ENCODE measurements at regions of chr3 and their contacts with region 1.

Region 1: GRCh38 chr3:114418724-114419543 is 125.1 kb downstream of the TIGIT start:
- DNase-seq: peak; percentile 68
- H3K4me3 Mint-ChIP-seq: no peak overlapping the region
- H3K27ac Mint-ChIP-seq: peak overlapping the region; percentile 76
- H3K4me1 Mint-ChIP-seq: peaks cover 18% of the 10 kb centered on the region
- H3K27me3 Mint-ChIP-seq: no peaks in the 10 kb centered on the region

Region 2: DNA sequence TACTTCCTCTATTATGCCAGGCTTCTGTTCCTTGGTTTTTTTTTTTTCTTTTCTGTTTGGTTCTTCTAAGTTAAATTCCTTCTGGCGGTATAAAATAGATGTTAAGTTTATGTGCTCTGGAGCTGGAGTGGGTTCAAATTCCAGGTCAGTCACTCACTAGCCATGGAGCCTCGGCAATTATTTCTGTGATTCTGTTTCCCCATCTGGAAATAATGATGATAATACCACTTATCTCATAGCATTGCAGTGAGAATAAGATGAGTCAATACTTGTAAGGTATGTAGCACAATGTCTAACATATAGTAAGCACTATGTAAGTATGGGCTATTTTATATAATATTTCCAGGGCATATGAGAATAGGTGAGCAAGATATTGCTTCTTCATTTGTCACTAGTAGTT is 504.3 kb before region 1 on chr3:
- intact Hi-C with region 1: no loop called
- DNase-seq: no peak
- H3K4me3 Mint-ChIP-seq: no peak overlapping the region
- H3K27ac Mint-ChIP-seq: no peak overlapping the region
- H3K4me1 Mint-ChIP-seq: peaks cover 3% of the 10 kb centered on the region
- H3K27me3 Mint-ChIP-seq: peaks cover 12% of the 10 kb centered on the region

Region 3: GRCh38 chr3:114093596-114093995 is 325.3 kb before region 1 on chr3:
- intact Hi-C with region 1: no loop called
- DNase-seq: no peak
- H3K4me3 Mint-ChIP-seq: no peak overlapping the region
- H3K27ac Mint-ChIP-seq: no peak overlapping the region
- H3K4me1 Mint-ChIP-seq: peaks cover 2% of the 10 kb centered on the region
- H3K27me3 Mint-ChIP-seq: peaks cover 16% of the 10 kb centered on the region

Region 4: DNA sequence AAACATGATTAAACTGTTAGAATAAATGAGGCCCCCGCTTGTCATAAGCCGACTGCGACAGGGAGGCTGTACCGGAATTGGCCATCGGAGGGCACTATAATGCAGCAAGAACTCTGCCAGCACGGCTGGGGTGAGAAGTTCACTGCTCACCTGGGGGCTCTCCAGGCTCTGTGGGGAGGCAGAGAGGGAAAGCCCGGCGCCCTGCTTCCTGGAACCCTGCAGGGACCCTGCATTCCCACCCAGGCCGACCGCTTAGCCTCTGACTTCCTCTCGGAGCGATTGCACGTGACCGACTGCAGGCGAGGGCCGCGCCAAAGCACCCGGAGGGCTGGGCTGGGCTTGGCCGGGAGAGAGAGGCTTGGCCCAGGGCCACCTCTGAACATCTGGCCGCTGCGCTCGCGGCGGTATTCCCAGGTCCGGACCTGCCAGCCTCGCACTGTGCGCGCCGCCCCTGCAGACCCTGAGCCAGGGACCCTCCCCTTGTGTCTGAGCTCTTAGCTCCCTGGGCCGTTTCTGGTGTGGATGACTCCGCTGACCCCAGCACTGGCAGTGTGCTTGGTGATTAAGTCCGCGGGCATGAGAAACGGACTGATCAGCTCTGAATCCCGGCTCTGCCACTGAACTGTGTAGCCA is 266.3 kb before region 1 on chr3:
- intact Hi-C with region 1: loop called (anchors 1 kb)
- DNase-seq: peak; percentile 92
- H3K4me3 Mint-ChIP-seq: peak overlapping the region; percentile 54
- H3K27ac Mint-ChIP-seq: no peak overlapping the region
- H3K4me1 Mint-ChIP-seq: peaks cover 3% of the 10 kb centered on the region
- H3K27me3 Mint-ChIP-seq: peaks cover 7% of the 10 kb centered on the region

Region 5: DNA sequence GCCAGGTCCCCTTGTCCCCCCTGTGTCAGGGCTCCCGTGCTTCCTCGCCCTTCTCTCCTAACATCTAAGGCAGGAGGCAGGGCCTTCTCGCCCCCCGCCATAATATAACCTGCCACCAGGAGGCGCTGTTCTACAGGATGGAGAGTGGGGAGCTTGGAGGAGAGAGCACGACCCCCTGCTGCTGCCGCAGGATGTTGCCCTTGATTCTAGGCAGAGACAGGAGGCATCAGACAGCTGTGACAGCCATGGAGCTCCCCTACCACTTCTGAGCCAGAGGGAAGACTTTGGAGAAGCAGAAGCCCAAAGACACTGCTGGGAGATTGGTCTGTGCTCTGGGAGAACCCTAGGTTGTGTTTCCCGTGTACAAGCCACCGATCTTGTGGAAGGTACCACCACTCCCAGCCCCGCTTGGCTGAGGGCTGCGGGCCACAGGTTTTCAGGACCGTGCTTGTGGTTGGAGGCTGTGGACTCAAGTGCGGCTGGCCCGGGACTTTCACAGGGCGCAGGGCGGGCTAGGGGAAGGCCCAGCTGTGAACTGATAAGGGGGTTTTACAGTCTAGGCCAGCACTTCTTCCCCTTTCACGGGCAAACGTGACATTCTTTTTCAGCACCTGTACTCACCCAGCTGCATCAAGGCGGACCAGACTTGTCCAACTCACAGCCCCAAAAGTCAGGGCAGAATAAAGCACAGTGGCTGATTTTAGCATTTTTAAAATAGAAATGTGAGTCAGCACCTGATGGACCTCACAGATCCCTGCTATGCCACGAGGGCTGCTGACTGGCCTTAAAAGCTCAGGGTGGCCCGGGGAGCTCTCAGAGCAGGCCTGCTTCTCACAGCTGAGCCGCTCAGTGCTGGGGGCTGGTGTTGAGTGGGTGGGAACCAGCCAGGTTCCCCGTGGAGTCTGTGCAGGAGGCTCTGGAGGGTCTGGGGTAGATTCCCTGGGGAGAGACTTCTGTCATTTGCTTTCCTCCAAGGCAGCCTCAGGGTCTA is 127.7 kb before region 1 on chr3:
- intact Hi-C with region 1: loop called (anchors 1 kb)
- DNase-seq: peak; percentile 94
- H3K4me3 Mint-ChIP-seq: peak overlapping the region; percentile 50
- H3K27ac Mint-ChIP-seq: peak overlapping the region; percentile 83
- H3K4me1 Mint-ChIP-seq: peaks cover 15% of the 10 kb centered on the region
- H3K27me3 Mint-ChIP-seq: no peaks in the 10 kb centered on the region

Region 6: DNA sequence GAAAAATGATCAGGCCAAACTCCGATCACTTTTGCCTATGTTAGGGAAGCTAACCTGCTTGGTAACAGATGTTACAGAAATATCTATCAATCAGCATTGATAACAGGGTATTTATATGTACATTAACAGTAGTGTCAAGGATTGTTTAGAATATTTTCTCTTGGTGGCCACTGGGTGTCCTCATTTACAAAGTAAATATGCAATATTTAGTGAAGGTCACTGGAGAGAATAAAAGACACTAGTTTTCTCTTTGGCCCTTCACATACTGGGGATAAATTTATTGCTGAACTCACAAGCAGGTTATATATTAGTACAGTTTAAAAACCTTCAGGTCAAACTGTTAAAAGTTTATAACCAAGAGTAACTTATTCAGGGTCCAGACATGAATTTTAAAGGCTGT is 56.1 kb before region 1 on chr3:
- intact Hi-C with region 1: loop called (anchors 1 kb)
- DNase-seq: no peak
- H3K4me3 Mint-ChIP-seq: no peak overlapping the region
- H3K27ac Mint-ChIP-seq: no peak overlapping the region
- H3K4me1 Mint-ChIP-seq: peaks cover 2% of the 10 kb centered on the region
- H3K27me3 Mint-ChIP-seq: no peaks in the 10 kb centered on the region

Region 7: GRCh38 chr3:115147329-115148141 is 728.6 kb after region 1 on chr3:
- intact Hi-C with region 1: loop called (anchors 10 kb)
- DNase-seq: peak; percentile 99
- H3K4me3 Mint-ChIP-seq: peak overlapping the region; percentile 91
- H3K27ac Mint-ChIP-seq: peak overlapping the region; percentile 98
- H3K4me1 Mint-ChIP-seq: peaks cover 16% of the 10 kb centered on the region
- H3K27me3 Mint-ChIP-seq: no peaks in the 10 kb centered on the region

Measured in activated CD4-positive, alpha-beta T cell treated with anti-CD3 and anti-CD28 coated beads, Interleukin-2, amount 10 ng/mL, durations not matched to agents 24 days and 14 days (primary cell).